Dendritic cell treated with granulocyte-macrophage colony-stimulating factor and Interleukin-4, amounts not matched to agents 40 ng/mL and 50 ng/mL, for 4 days (primary cell): ENCODE measurements at regions of chr2 and their contacts with region 1.

Region 1: GRCh38 chr2:69643602-69644505 is at the start of gene AAK1:
- H3K4me3 Mint-ChIP-seq: peak within 1 kb of the TSS; percentile 93
- H3K27ac Mint-ChIP-seq: peak within 1 kb of the TSS; percentile 99
- H3K4me1 Mint-ChIP-seq: peaks cover 54% of the 10 kb centered on the region
- H3K27me3 Mint-ChIP-seq: no peaks in the 10 kb centered on the region

Region 2: DNA sequence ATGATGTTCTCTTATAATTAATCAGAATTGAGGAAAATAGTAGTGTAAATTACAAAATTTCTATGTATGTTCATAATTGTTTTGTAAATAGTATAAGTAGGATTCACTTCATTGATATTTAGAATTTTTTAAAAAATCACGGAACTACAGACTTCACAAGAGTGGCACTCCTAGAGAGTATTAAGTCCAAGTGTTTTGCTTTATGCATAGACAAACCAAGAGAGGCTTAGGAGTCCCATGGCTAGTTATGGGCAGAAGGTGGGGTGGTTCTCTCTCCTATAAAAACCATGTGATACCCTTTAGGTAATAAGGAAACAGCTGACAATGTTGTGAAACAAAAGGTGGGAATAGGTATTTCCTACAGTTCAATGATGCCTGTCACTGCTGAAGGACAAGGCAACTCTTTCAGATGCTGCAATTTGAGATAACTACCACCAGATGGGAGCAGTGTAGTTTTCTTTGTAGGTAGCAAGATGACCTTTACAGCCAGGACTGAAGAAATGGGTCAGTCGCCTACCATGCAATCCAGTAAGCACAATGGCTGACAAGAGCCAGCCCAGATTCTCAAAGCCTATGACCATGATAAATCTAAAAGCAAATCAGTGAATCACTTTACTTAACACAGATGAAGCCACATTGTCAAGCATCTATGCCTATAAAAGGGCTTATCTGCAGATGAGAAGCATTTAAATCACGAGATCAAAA is 84.3 kb before region 1 on chr2:
- intact Hi-C with region 1: loop called (anchors 5 kb)
- H3K4me3 Mint-ChIP-seq: no peak overlapping the region
- H3K27ac Mint-ChIP-seq: no peak overlapping the region
- H3K4me1 Mint-ChIP-seq: peaks cover 48% of the 10 kb centered on the region
- H3K27me3 Mint-ChIP-seq: no peaks in the 10 kb centered on the region

Region 3: GRCh38 chr2:69577467-69578197 is 66.2 kb before region 1 on chr2:
- intact Hi-C with region 1: loop called (anchors 5 kb)
- H3K4me3 Mint-ChIP-seq: no peak overlapping the region
- H3K27ac Mint-ChIP-seq: peak overlapping the region; percentile 40
- H3K4me1 Mint-ChIP-seq: peaks cover 87% of the 10 kb centered on the region
- H3K27me3 Mint-ChIP-seq: no peaks in the 10 kb centered on the region

Region 4: DNA sequence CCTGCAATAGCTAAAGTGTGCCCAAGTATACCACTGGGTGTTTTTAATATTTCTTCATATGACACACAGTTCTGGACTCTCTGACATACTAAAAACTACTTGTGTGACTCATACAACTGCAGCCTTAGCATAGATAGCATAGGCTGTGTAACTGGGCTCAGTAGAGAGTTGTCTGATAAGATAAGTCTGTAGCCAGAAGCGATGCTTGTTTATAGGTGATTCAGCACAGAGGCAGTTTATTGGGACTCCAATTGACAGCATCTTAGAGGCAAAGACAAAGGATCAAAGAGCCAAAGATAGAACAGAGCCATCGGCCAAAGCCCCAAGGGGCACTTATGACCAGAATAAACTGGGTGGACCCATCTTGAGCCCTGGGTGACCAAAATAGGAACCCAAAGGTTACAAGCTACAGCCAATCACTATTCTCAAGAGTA is 42.7 kb before region 1 on chr2:
- intact Hi-C with region 1: no loop called
- H3K4me3 Mint-ChIP-seq: no peak overlapping the region
- H3K27ac Mint-ChIP-seq: no peak overlapping the region
- H3K4me1 Mint-ChIP-seq: peaks cover 54% of the 10 kb centered on the region
- H3K27me3 Mint-ChIP-seq: no peaks in the 10 kb centered on the region

Region 5: GRCh38 chr2:69616756-69617155 is 27.1 kb before region 1 on chr2:
- intact Hi-C with region 1: no loop called
- H3K4me3 Mint-ChIP-seq: no peak overlapping the region
- H3K27ac Mint-ChIP-seq: no peak overlapping the region
- H3K4me1 Mint-ChIP-seq: peaks cover 17% of the 10 kb centered on the region
- H3K27me3 Mint-ChIP-seq: no peaks in the 10 kb centered on the region

Region 6: GRCh38 chr2:69680001-69680675 is 36.3 kb after region 1 on chr2:
- intact Hi-C with region 1: loop called (anchors 1 kb)
- H3K4me3 Mint-ChIP-seq: peak overlapping the region; percentile 61
- H3K27ac Mint-ChIP-seq: peak overlapping the region; percentile 85
- H3K4me1 Mint-ChIP-seq: peaks cover 54% of the 10 kb centered on the region
- H3K27me3 Mint-ChIP-seq: no peaks in the 10 kb centered on the region

Region 7: GRCh38 chr2:69714024-69714423 is 70.2 kb after region 1 on chr2:
- intact Hi-C with region 1: loop called (anchors 5 kb)
- H3K4me3 Mint-ChIP-seq: no peak overlapping the region
- H3K27ac Mint-ChIP-seq: no peak overlapping the region
- H3K4me1 Mint-ChIP-seq: peaks cover 11% of the 10 kb centered on the region
- H3K27me3 Mint-ChIP-seq: no peaks in the 10 kb centered on the region

Region 8: GRCh38 chr2:69829256-69830046 is 185.6 kb after region 1 on chr2 and contains the start of gene GMCL1:
- intact Hi-C with region 1: loop called (anchors 5 kb)
- H3K4me3 Mint-ChIP-seq: peak within 1 kb of the TSS; percentile 94
- H3K27ac Mint-ChIP-seq: peak within 1 kb of the TSS; percentile 89
- H3K4me1 Mint-ChIP-seq: peaks cover 31% of the 10 kb centered on the region
- H3K27me3 Mint-ChIP-seq: no peaks in the 10 kb centered on the region